Breast epithelium (tissue), 4 donors: ENCODE measurements at regions of chr16 and their contacts with region 1.

Region 1: DNA sequence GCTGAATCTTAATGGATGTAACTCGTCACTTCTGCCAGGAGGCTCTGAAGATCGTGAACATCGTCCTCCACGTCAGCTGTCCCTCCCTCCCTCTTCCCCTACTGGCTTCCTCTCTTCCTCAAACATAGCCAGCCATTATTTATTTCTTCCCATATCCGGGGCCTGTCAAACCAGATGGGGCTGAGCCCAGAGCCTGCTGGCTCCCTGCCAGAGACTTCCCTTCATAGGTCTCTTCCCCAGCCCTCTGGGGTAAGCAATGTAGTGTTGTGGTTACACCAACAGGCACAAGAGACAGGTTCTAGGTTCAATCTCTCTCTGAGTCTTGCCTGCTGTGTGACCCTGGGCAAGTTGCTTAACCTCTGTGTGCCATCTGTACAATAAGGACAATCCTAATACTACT is 40.1 kb upstream of the ZFP90 start:
- DNase-seq: peak in 1 of 2 donors; percentile 31
- H3K4me3 ChIP-seq: no peak overlapping the region
- H3K27ac ChIP-seq: no peak overlapping the region
- H3K4me1 ChIP-seq: peaks cover 0 to 7% of the 10 kb centered on the region in 2 donors
- H3K27me3 ChIP-seq: no peaks in the 10 kb centered on the region
- CTCF ChIP-seq: no peak
- POLR2A ChIP-seq: no peak

Region 2: GRCh38 chr16:68444056-68444657 is 54.8 kb before region 1 on chr16:
- intact Hi-C with region 1: loop called (anchors 2 kb)
- DNase-seq: no peak
- H3K4me3 ChIP-seq: no peak overlapping the region
- H3K27ac ChIP-seq: no peak overlapping the region
- H3K4me1 ChIP-seq: peaks cover 9 to 11% of the 10 kb centered on the region in 2 donors
- H3K27me3 ChIP-seq: peaks cover 2 to 9% of the 10 kb centered on the region in 2 donors
- CTCF ChIP-seq: no peak
- POLR2A ChIP-seq: no peak

Region 3: GRCh38 chr16:69542974-69543373 is 1044.0 kb after region 1 on chr16:
- intact Hi-C with region 1: no loop called
- DNase-seq: no peak
- H3K4me3 ChIP-seq: no peak overlapping the region
- H3K27ac ChIP-seq: no peak overlapping the region
- H3K4me1 ChIP-seq: no peaks in the 10 kb centered on the region
- H3K27me3 ChIP-seq: no peaks in the 10 kb centered on the region
- CTCF ChIP-seq: no peak
- POLR2A ChIP-seq: no peak